HEK293T (cell line): ENCODE measurements at regions of chr1 and their contacts with region 1.

Region 1: GRCh38 chr1:218284934-218285635 is at the start of gene RRP15:
- DNase-seq: peak; percentile 80

Region 2: DNA sequence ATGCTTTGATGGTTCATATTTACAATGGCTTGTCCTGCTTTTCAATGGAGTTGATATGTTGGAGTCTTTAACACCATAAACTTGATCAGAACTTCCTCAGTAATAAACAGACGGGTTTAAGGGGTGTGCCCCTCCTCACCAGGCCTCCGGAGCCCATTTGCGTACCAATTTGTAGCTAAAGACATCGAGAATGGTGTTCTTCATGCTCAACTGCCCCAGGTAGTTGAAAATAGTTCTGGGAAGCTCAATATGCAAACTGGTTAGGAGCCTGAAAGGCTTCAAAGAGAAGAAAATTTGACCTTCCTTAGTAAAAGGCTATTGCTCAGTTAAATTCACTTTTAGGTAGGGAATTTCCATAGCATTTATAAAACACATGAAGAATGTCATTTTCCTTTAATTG is 68.0 kb before region 1 on chr1:
- CTCF ChIA-PET with region 1: no interaction called
- POLR2A ChIA-PET with region 1: no interaction called
- DNase-seq: no peak

Region 3: GRCh38 chr1:218297867-218298266 is 12.8 kb after region 1 on chr1:
- CTCF ChIA-PET with region 1: no interaction called
- POLR2A ChIA-PET with region 1: interaction called, 13 read pairs
- DNase-seq: no peak